MCF 10A (cell line): ENCODE measurements at regions of chr11 and their contacts with region 1.

Region 1: GRCh38 chr11:125141686-125142535 is 22.6 kb upstream of the PKNOX2 start:
- DNase-seq: peak; percentile 40
- H3K4me3 Mint-ChIP-seq: no peak overlapping the region
- H3K27ac Mint-ChIP-seq: no peak overlapping the region
- H3K4me1 Mint-ChIP-seq: peaks cover 6% of the 10 kb centered on the region
- H3K27me3 Mint-ChIP-seq: no peaks in the 10 kb centered on the region
- CTCF ChIP-seq: peak; percentile 98

Region 2: DNA sequence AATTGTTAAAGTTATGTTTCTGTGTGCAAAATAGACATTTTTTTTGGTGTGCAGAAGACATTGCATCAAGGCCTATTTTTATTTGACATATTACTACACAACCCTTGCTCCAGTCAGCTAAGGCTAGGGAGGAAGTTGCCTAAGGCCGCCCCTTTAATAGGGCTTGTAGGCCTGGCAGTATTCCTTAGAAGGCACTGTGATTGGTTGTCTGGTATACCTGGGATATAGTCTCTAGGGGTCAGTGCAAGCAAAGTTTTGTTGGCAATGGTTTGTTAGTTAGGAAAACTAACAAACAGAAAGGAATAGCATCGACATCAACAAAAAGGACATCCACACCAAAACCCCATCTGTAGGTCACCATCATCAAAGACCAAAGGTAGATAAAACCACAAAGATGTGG is 171.0 kb before region 1 on chr11:
- CTCF ChIA-PET with region 1: interaction called, 102 read pairs
- POLR2A ChIA-PET with region 1: no interaction called
- intact Hi-C with region 1: loop called (anchors 1 kb)
- DNase-seq: peak; percentile 66
- H3K4me3 Mint-ChIP-seq: no peak overlapping the region
- H3K27ac Mint-ChIP-seq: no peak overlapping the region
- H3K4me1 Mint-ChIP-seq: no peaks in the 10 kb centered on the region
- H3K27me3 Mint-ChIP-seq: no peaks in the 10 kb centered on the region
- CTCF ChIP-seq: peak; percentile 22

Region 3: DNA sequence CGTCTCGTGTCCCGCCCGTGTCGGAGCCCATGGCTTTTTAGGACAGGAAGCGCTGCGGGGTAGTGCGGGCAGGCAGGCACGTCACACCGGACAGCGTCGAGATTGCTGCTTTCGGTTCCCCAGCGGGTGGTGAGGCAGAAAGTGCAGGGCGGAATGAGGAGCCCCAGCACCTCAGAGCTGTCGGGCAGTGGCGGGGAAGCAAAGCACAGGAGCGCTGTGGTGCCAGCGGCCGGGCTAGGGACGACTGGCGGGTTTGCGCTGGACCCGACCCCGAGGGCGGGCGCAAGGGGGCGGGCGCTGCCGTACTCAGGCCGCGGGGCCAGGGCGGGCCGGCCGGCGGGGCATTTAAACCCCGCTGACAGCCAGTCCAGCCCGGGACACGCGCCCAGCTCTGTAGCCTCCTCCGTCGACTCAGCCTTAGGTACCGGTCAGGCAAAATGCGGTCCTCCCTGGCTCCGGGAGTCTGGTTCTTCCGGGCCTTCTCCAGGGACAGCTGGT is 78.9 kb before region 1 on chr11 and contains the start of gene SLC37A2:
- CTCF ChIA-PET with region 1: interaction called, 11 read pairs
- POLR2A ChIA-PET with region 1: no interaction called
- intact Hi-C with region 1: loop called (anchors 1 kb)
- DNase-seq: peak; percentile 62
- H3K4me3 Mint-ChIP-seq: peak within 1 kb of the TSS; percentile 86
- H3K27ac Mint-ChIP-seq: peak within 1 kb of the TSS; percentile 54
- H3K4me1 Mint-ChIP-seq: no peaks in the 10 kb centered on the region
- H3K27me3 Mint-ChIP-seq: no peaks in the 10 kb centered on the region
- CTCF ChIP-seq: peak; percentile 15
- total RNA-seq, gene SLC37A2: 5.2 and 7.8 TPM in 2 replicates

Region 4: GRCh38 chr11:125091247-125091876 is 50.5 kb before region 1 on chr11:
- CTCF ChIA-PET with region 1: interaction called, 29 read pairs
- POLR2A ChIA-PET with region 1: no interaction called
- intact Hi-C with region 1: no loop called
- DNase-seq: peak; percentile 40
- H3K4me3 Mint-ChIP-seq: no peak overlapping the region
- H3K27ac Mint-ChIP-seq: peak overlapping the region; percentile 13
- H3K4me1 Mint-ChIP-seq: peaks cover 13% of the 10 kb centered on the region
- H3K27me3 Mint-ChIP-seq: no peaks in the 10 kb centered on the region
- CTCF ChIP-seq: peak; percentile 42

Region 5: GRCh38 chr11:125123947-125124617 is 17.8 kb before region 1 on chr11:
- CTCF ChIA-PET with region 1: interaction called, 34 read pairs
- POLR2A ChIA-PET with region 1: no interaction called
- intact Hi-C with region 1: no loop called
- DNase-seq: peak; percentile 56
- H3K4me3 Mint-ChIP-seq: no peak overlapping the region
- H3K27ac Mint-ChIP-seq: no peak overlapping the region
- H3K4me1 Mint-ChIP-seq: no peaks in the 10 kb centered on the region
- H3K27me3 Mint-ChIP-seq: no peaks in the 10 kb centered on the region
- CTCF ChIP-seq: no peak

Region 6: GRCh38 chr11:125404776-125405435 is 263.0 kb after region 1 on chr11:
- CTCF ChIA-PET with region 1: interaction called, 18 read pairs
- POLR2A ChIA-PET with region 1: interaction called, 3 read pairs
- intact Hi-C with region 1: no loop called
- DNase-seq: peak; percentile 55
- H3K4me3 Mint-ChIP-seq: no peak overlapping the region
- H3K27ac Mint-ChIP-seq: no peak overlapping the region
- H3K4me1 Mint-ChIP-seq: peaks cover 6% of the 10 kb centered on the region
- H3K27me3 Mint-ChIP-seq: peaks cover 85% of the 10 kb centered on the region
- CTCF ChIP-seq: peak; percentile 92